ENCODE measurements at regions of chr1 and their contacts with region 1.

Region 1: DNA sequence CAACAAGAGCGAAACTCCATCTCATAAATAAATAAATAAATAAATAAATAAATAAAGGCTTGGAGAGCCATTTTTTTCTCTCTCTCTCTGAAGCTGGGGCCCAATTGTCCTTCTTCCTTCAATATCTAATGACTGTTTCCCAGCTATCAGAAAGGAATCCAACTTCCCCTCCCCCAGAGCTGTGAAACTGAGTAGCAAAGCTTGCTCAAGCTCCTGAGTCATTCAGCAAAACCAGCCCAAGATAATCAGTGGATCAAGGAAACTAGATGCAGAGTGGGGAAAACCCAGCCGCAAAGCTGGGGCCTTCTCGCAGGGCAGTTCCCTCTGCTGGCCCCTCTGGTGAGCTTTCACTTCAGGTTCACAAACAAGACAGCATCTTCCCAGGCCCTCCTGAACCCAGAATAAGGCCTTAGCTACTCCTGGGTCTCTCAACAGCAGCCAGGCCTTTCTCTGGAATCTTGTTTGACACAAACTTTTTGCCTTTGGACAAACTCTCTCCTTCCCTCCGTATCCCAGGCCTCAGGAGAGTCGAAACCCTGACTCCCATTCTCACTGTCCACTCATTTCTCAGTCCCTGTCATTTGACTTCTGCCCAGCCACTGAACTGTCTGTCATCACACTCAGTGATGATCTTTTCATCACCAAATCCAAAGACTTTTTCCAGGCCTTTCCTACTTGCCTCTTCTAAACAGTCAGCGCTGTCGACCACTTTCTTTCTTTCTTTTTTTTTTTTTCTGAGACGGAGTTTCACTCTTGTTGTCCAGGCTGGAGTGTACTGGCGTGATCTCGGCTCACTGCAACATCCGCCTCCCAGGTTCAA is 18.0 kb upstream of the PTP4A2 start:
- DNase-seq: peak; percentile 80
- CTCF ChIP-seq: peak; percentile 25

Region 2: GRCh38 chr1:31723828-31724359 is 232.2 kb before region 1 on chr1:
- CTCF ChIA-PET with region 1: no interaction called
- POLR2A ChIA-PET with region 1: no interaction called
- DNase-seq: peak; percentile 64
- CTCF ChIP-seq: no peak

Region 3: GRCh38 chr1:31938174-31938950 is 17.8 kb before region 1 on chr1 and contains the start of gene PTP4A2:
- CTCF ChIA-PET with region 1: interaction called, 501 read pairs
- POLR2A ChIA-PET with region 1: interaction called, 33 read pairs
- DNase-seq: peak; percentile 95
- CTCF ChIP-seq: peak; percentile 80

Region 4: DNA sequence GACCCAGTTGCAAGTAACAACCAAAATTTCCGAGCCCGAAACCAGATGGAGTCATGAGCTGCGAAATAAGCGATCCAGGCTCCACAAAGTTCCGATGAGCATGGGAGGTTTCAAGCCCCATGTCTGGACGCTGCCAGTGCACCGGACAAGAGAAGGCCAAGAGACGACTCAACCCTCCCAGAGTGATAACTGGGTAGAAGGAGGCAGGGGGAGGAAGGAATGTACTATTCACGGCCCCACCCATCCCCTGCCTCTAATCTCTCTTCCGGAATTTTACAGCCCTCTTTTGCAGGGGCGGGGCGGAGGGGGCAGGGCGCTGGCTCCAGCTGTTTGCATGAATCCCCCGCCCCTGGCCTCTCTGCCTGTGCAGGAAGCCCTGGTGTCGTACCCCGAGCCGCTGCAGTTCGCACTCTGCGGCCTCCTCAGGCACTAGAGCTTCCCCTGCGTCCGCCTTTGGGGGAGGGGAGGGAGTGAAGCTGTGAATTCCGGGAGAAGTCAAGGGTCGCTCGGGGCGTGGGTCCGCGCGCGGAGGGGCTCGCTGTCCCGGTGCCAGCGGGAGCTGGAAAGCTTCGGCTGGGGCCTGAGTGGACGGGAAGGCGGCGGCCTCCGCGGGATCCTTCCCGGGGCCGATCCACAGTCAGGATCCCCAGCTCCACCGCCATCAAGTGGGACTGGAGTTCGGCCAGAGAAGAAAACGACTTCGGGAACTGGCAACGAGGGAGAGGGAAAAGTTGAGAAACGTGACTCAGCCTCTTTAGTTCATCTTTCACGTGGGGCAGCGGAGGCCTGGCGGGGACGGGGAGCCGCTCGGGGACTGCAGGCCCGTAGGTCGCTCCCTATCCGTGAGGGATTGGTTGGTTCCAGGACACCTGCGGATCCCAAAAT is 11.7 kb before region 1 on chr1:
- CTCF ChIA-PET with region 1: interaction called, 501 read pairs
- POLR2A ChIA-PET with region 1: interaction called, 33 read pairs
- DNase-seq: peak; percentile 91
- CTCF ChIP-seq: no peak

Region 5: DNA sequence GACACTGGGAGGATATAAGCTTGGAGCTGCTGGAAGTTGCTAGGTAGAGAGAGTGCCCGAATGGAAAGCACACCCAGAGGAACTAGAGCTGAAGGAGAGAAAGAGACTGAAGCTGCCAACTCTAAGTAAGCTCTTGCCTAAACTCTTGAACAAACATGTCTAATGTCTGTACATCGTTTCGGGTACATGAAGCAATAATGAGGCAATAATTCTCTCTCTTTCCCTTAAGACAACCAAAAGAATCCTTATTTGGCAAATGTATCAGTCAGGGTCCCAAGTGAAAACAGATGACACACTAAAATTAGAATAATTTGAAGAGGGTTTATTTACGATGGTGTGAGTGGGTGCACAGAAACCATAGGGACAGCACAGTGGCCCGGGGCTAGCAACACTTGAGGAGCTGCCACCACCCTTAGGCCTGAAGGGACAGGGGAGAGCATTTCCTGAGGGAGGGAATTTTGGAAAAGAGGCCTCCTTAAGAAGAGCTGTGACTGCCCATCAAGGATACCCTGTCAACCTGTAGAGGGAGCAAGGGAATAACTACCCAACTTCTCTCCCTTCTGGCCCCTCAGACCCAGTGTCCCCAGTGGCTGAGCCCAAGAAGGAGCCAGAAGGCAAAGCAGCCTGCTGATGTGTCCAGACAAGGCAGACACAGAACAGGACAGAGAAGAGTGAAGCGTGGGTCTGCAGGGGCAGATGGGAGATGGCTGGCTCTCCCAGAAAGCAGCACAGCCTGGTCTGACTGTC is 21.4 kb after region 1 on chr1:
- CTCF ChIA-PET with region 1: interaction called, 91 read pairs
- POLR2A ChIA-PET with region 1: no interaction called
- DNase-seq: peak; percentile 45
- CTCF ChIP-seq: peak; percentile 26

Region 6: DNA sequence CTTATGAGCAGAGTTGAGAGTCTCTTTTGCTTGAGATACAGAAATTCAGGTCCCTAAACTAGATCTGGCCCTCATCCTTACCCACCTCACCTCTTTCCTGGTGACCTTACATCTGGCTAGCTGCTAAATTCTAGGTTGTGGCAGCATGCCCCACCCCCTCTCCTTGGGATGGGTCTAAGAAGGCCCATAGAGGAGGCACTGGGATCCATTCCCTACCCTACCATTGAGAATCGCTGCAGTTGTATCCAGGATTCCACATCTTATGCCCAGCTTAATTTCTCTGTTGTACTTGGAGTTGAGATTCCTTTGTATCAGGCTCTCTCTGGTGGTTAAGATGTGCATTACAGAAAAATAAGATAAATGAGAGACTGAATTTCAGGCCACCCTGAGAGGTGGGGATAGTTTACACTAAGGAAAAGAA is 107.1 kb after region 1 on chr1:
- CTCF ChIA-PET with region 1: interaction called, 5 read pairs
- POLR2A ChIA-PET with region 1: interaction called, 13 read pairs
- DNase-seq: peak; percentile 43
- CTCF ChIP-seq: peak; percentile 61